ENCODE measurements at regions of chr15 and their contacts with region 1.

Region 1: DNA sequence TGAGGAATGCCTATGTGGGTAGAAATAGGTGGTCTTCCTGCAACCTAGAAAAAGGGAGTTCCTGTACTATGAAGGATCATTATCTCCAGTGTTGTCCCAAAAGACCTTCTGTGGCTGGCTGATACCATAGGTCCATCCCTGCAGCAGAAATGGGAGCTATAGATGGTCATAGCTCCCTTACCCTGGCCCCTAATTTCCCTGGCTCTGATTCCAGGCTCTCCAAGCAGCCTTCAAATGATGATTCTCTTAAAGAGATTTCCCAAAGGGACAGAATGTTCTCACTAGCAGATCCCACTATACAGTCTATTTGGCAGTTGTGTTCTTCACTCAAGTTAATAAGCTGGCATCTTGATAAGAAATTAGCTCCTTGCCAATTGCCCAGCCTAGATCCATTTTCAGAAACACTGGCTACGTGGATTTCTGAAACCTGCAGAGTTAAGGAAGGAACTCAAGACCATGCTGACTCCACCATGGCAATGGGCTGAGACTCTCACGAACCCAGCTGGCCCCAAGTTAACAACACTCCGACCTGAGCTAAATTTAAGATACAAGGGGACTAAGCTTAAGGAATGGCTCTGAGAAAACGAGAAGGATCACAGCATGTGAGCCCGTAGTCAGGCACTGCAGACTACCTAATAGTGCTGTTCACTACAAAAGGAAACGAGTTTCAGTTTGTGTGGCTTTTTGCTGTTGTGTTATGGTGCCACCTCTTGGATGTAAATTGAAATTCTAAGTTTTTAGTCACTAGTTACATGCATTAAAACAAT is 11.4 kb downstream of the C15orf40 start:
- DNase-seq: peak; percentile 38
- ATAC-seq: peak; percentile 93
- H3K4me3 Mint-ChIP-seq: peak overlapping the region; percentile 53
- H3K27ac Mint-ChIP-seq: peak overlapping the region; percentile 70
- H3K4me1 Mint-ChIP-seq: peaks cover 9% of the 10 kb centered on the region
- H3K27me3 Mint-ChIP-seq: no peaks in the 10 kb centered on the region
- CTCF ChIP-seq: peak; percentile 77

Region 2: DNA sequence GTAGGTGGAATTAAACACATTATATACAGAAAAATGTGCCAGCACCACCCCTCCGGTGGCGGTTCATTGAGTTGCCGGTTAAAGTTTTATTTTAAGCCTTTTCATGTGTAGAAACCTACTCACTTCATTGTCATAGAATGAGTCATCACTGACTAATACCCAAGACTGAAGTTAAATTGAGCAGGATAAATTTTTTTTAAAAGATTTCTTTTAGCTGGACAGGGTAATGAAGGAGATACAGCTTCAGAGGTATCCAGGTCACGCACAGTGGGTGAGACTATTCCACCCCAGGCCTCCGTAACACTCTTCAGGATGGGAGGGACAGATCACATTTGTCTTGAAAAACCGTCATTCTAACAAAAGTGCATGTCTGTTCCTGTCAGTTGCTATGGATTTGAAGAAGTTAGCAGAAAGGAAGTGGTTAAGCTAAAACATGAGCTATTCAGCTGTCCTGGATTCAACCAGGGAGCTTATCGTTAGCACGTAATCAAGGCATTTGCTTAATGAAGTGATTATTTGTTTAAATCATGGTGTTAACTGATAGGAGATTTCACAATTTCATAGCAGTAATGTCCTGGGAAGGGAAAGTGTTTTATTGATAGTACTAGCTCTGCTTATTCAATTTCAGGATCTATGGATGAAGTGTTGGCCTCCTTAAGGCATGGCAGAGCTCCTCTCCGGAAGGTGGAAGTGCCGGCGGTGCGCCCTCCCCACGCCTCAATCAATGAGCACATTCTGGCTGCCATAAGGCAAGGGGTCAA is 167.3 kb before region 1 on chr15:
- CTCF ChIA-PET with region 1: interaction called, 11 read pairs
- POLR2A ChIA-PET with region 1: no interaction called
- intact Hi-C with region 1: no loop called
- DNase-seq: peak; percentile 76
- ATAC-seq: peak; percentile 91
- H3K4me3 Mint-ChIP-seq: no peak overlapping the region
- H3K27ac Mint-ChIP-seq: peak overlapping the region; percentile 87
- H3K4me1 Mint-ChIP-seq: peaks cover 33% of the 10 kb centered on the region
- H3K27me3 Mint-ChIP-seq: no peaks in the 10 kb centered on the region
- CTCF ChIP-seq: no peak

Region 3: DNA sequence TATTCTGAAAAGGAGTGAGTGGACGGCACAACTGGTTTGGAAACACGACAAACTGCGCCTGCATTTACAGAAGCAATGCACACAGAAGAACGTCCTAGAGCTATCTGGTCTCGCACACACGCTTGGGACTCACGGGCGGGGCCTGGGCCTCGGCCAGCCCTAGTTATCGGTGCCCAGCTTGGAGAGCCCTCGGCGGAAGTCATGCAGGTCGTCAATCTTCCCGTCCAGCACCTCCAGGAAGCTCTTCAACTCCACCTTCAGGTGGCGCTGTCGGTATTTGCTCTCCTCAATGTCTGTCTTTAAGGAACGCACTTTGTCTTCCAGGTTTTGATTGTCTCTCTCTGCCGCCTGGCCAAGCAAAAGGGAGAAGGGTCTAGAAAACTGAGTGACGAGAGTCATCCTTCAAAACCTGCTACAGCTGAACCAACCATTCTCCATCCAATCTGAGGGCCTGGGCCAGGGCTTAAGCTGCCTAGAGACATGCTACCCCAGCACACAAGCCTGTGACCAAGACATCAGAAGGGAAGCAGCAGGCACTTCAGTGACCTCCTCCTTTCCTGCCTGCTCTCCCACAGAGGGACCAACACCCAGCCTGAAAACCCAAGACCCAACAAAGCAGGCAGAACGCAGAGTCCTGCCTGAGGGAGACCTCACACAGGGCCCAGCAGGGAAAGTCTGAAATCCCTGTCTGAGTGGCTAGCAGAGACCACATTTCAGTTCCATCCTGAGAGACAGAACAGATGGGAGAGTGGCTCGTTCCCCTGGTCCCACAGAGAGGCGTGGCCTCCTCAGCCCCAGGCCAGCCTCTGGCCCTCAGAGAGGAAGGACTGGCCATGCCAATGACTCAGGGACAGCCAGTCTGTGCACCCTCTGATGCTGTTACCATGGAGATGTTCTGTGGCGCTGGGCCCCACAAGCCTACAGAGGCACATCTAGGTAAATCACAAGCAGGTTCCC is 150.3 kb before region 1 on chr15:
- CTCF ChIA-PET with region 1: interaction called, 43 read pairs
- POLR2A ChIA-PET with region 1: no interaction called
- intact Hi-C with region 1: loop called (anchors 5 kb)
- DNase-seq: peak; percentile 69
- ATAC-seq: peak; percentile 83
- H3K4me3 Mint-ChIP-seq: no peak overlapping the region
- H3K27ac Mint-ChIP-seq: no peak overlapping the region
- H3K4me1 Mint-ChIP-seq: peaks cover 14% of the 10 kb centered on the region
- H3K27me3 Mint-ChIP-seq: no peaks in the 10 kb centered on the region
- CTCF ChIP-seq: peak; percentile 73

Region 4: DNA sequence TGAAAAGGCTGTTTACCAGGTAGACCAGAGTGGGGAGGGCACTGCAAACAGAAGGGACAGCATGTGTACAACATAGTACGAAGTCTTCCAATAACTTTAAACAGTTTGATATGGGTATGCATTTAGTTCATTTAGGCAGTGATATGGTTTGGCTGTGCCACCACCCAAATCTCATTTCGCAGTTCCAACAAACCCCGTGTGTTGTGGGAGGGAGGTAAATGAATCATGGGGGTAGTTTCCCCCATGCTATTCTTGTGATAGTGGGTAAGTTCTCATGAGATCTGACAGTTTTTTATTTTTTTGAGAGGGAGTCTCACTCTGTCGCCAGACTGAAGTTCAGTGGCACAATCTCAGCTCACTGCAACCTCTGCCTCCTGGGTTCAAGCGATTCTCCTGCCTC is 21.6 kb before region 1 on chr15:
- CTCF ChIA-PET with region 1: no interaction called
- POLR2A ChIA-PET with region 1: no interaction called
- intact Hi-C with region 1: no loop called
- DNase-seq: no peak
- ATAC-seq: no peak
- H3K4me3 Mint-ChIP-seq: no peak overlapping the region
- H3K27ac Mint-ChIP-seq: no peak overlapping the region
- H3K4me1 Mint-ChIP-seq: peaks cover 7% of the 10 kb centered on the region
- H3K27me3 Mint-ChIP-seq: no peaks in the 10 kb centered on the region
- CTCF ChIP-seq: no peak

Region 5: DNA sequence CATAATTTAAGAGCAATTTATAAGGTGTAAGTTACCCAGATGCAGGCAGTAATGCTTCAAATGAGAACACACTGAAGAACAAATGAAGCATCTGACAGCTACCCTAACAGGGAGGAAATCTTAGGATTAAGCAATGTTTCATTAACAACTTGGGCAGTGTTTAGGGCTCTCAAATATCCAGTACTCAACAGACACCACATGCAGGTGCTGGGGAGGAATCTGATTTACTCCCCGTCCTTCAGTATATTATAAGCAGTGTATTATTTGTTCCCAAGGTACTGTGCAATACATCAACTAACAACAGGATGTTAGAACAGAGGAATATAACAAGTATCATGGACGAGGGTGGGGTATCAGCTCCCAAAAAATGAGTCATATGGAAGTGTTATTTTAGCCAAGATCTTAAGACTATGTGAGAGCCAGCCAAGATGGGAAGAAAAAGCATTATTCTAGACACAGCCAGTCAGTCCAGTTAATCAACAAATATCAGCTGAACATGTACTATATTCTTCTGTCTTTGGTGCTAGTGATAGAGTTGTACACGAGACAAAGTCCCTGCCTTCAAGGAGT is 46.6 kb after region 1 on chr15:
- CTCF ChIA-PET with region 1: no interaction called
- POLR2A ChIA-PET with region 1: no interaction called
- intact Hi-C with region 1: no loop called
- DNase-seq: no peak
- ATAC-seq: no peak
- H3K4me3 Mint-ChIP-seq: no peak overlapping the region
- H3K27ac Mint-ChIP-seq: no peak overlapping the region
- H3K4me1 Mint-ChIP-seq: peaks cover 12% of the 10 kb centered on the region
- H3K27me3 Mint-ChIP-seq: no peaks in the 10 kb centered on the region
- CTCF ChIP-seq: no peak

Measured in activated CD8-positive, alpha-beta T cell treated with anti-CD3 and anti-CD28 coated beads for 36 hours (primary cell).